Ascending aorta (tissue), 2 donors: ENCODE measurements at regions of chr14 and their contacts with region 1.

Region 1: DNA sequence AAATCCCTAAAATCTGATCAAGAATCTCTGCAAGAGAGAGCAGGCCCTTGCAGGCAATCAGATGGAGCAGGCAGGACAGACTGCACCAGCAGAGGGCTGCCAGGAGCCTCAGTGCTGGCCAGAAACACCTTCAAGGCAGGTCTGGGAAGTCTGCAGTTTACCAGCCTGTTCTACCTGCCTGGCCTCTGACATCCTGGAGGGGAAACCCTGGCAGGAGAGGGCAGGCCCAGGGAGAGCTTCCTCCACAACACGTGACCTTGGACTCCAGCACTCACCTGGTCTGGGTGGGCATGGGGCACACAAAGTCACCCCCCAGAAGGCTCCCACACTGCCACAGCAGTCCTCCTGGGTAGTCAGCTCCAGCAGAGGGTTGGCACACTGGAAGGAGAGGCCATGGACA is 56.0 kb downstream of the ISCA2 start:
- DNase-seq: no peak
- H3K4me3 ChIP-seq: no peak overlapping the region
- H3K27ac ChIP-seq: peak overlapping the region; percentile 85 to 91
- H3K4me1 ChIP-seq: peaks cover 38 to 58% of the 10 kb centered on the region in 2 donors
- H3K27me3 ChIP-seq: no peaks in the 10 kb centered on the region
- CTCF ChIP-seq: peak in 1 of 3 experiments; percentile 34

Region 2: GRCh38 chr14:74444866-74445265 is 104.7 kb before region 1 on chr14:
- intact Hi-C with region 1: no loop called
- DNase-seq: peak in 1 of 2 donors; percentile 11
- H3K4me3 ChIP-seq: no peak overlapping the region
- H3K27ac ChIP-seq: no peak overlapping the region
- H3K4me1 ChIP-seq: no peaks in the 10 kb centered on the region
- H3K27me3 ChIP-seq: no peaks in the 10 kb centered on the region
- CTCF ChIP-seq: no peak

Region 3: GRCh38 chr14:74514471-74514941 is 35.1 kb before region 1 on chr14:
- intact Hi-C with region 1: loop called (anchors 5 kb)
- DNase-seq: peak; percentile 42 to 82
- H3K4me3 ChIP-seq: peak overlapping the region in 1 of 2 donors; percentile 1
- H3K27ac ChIP-seq: peak overlapping the region; percentile 78 to 82
- H3K4me1 ChIP-seq: peaks cover 5 to 39% of the 10 kb centered on the region in 2 donors
- H3K27me3 ChIP-seq: no peaks in the 10 kb centered on the region
- CTCF ChIP-seq: no peak

Region 4: DNA sequence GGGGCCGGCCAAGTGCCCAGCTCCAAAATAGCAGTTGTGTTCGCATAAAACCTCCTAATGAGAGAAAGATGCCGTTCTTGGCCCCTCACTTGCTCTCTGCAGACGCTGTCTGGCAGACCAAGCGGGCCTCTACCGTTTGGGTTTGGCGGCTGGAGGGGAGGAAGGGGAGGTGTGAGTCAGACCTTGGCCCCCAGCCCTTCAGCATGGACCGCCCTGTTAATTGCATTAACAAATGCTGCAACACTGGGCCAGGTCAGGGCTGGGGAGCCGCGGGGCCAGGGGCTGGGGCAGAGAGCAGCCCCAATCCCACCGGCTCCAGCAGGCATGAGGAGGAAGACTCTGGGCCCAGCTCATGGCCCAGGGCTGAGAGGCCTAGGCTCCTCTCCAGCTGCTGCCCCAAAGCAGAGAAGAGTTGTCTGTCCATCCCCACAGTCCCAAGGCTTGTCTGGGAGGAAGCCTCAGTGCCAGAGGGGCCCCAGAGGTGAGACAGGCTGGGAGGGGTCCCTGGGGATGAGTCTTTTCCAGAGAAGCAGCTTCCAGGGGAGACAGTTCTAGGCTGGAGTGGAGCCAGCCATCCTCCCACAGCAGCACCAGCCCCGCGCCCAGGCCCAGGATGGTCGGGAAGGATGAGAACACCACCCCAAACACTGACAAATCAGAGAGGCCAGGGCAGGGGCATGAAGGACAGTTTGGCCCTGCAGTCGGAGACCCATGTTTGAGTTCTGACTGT is 45.6 kb after region 1 on chr14:
- intact Hi-C with region 1: loop called (anchors 2 kb)
- DNase-seq: peak in 1 of 2 donors; percentile 84
- H3K4me3 ChIP-seq: peak overlapping the region in 1 of 2 donors; percentile 16
- H3K27ac ChIP-seq: peak overlapping the region; percentile 91 to 94
- H3K4me1 ChIP-seq: peaks cover 50 to 80% of the 10 kb centered on the region in 2 donors
- H3K27me3 ChIP-seq: no peaks in the 10 kb centered on the region
- CTCF ChIP-seq: no peak